Head of caudate nucleus (tissue), 42 donors: ENCODE measurements at regions of chr22 and their contacts with region 1.

Region 1: DNA sequence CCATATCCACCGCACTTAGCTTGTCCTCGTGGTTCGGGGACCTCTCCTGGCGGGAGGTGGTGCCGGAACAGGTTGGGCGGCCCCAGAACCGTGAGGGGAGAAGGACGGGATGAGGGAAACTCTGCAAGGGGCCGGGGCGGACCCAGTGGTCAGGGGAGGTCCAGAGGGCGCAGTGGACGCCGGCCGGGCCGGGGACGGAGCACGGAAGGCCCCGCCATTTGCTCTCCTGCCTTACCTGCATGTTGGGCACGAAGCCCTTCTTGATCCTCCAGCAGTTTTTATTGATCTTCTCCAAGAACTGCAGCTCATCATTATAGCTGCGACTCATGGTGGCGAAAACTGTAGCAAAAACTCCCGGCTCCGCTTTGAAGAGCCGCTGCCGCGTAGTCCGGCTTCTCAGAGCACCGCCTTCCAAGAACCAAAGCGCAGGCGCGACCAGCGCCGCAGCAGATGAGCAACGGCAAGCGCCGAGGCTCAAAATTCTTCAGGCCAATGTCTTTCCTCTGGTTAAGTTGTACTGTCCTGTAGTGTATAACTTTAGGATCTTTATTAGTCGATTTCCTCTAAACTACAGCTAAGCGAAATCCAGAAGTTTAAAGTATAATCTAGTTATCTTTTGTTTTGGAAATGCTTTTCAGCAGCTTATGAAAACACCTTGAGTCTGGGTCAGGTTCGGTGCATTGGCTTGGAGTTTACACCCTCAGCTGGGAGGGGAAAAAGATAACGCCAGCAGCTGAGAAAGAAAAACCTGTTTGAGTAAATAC is at the start of gene RTCB:
- DNase-seq: peak; percentile 80 to 97 (median 92)

Region 2: DNA sequence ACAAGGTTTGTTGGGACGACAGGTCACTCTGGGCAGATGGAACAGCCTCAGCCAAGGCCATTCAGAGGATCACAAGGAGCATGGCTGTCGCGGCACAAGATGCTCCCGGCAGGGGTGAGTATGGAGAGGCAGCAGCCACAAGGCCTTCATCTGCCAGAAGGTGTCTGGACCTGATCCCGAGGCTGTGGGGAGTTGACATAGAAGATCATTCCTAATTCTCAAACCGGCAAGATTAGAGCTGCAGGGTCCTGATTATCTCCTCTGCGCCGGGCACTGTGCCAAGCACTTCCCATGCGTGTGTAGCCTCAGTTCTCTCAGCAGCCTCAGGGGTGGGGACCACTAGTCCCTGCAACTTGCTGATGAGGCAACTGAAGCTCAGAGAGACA is 86.6 kb before region 1 on chr22:
- intact Hi-C with region 1: no loop called
- DNase-seq: peak in 1 of 42 donors; percentile 27

Region 3: DNA sequence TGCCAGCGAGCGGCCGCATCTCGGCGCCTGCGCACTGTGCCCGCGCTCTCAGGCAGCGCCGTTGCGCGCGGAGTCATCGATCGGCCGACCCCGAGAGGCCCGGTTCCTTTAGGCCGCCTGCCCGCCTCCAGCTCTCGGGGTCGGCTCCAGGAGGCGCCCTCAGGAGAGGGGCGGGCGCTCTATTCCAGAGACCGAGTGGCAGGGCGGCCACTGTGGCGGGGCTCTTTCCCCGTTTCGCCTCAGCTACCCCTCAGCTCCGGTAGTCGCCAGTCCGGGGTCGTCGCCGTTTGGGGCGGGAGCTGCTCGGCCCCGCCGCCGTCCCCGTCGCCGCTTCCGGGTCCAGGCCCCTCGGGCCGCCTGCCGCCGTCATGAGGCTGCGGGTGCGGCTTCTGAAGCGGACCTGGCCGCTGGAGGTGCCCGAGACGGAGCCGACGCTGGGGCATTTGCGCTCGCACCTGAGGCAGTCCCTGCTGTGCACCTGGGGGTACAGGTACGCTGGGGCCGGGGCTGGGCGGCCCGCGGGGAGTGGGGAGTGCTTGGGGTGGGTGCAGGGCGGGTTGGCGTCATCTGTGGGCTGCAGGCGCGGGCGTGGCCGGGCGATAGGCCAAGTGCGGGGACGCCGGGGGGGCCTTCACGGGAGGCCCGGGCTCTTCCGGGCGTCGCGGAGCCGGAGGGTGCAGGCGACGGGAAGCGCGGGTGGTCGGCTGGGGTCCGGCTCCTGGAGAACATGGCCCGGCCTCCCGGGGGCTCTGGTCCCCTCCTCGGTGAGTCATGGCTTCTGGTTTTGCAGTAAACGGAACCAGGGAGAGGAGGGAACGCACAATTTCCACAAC is 62.8 kb after region 1 on chr22 and contains the start of gene FBXO7:
- intact Hi-C with region 1: loop called (anchors 2 kb)
- DNase-seq: peak; percentile 75 to 97 (median 94)